Endothelial cell of umbilical vein (primary cell): ENCODE measurements at regions of chr2 and their contacts with region 1.

Region 1: DNA sequence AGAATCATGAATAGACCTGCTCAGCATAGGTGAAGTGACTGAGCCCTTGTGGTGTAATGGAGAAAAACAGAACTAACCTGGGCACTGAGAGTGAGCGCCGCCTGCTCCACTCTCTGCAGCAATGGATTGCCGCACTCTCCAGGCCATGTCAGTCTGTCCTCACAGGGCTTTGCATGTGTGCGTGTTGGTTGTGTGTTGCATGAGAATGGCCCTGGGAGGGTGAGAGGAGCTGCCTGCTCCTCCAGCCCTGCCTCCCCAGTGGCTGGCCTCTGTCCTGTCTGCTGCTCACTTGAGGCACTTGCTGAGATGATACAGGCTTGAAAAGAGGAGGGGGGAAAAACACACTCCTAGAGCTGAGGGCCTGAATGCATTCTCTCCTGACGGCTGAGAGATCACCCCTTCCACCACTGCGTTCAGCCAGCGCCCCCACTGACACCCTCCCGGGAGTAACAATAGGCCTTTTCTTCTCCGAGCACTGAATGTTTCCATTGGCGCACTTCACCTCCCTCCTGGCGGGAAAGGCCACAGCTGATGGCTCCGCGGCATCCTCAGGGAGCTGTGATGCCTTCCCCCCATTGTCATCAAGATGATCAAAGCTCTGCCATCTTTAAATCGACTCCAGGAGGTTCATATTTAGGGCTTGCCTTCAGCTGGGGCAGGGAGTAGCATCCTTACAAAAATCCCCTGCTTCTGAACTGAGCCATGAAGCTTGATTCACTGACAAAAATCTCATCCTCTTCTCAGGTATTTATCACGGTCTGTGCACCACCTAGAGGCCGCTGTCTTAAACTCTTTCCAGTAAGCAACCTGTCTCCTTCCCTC is 49.9 kb upstream of the DAPL1 start:
- DNase-seq: peak; percentile 80
- H3K4me3 ChIP-seq: no peak overlapping the region
- H3K27ac ChIP-seq: no peak overlapping the region
- H3K4me1 ChIP-seq: peaks cover 3% of the 10 kb centered on the region
- H3K27me3 ChIP-seq: peaks cover 23 to 28% of the 10 kb centered on the region in 2 experiments
- CTCF ChIP-seq: peak; percentile 46 to 53
- POLR2A ChIP-seq: no peak

Region 2: GRCh38 chr2:158024288-158024898 is 720.9 kb before region 1 on chr2:
- CTCF ChIA-PET with region 1: interaction called, 207 read pairs
- POLR2A ChIA-PET with region 1: no interaction called
- dilution Hi-C with region 1: no loop called
- intact Hi-C with region 1: loop called (anchors 2 kb)
- DNase-seq: peak; percentile 61
- H3K4me3 ChIP-seq: no peak overlapping the region
- H3K27ac ChIP-seq: no peak overlapping the region
- H3K4me1 ChIP-seq: no peaks in the 10 kb centered on the region
- H3K27me3 ChIP-seq: peaks cover 6 to 11% of the 10 kb centered on the region in 2 experiments
- CTCF ChIP-seq: peak; percentile 70 to 84
- POLR2A ChIP-seq: no peak

Region 3: DNA sequence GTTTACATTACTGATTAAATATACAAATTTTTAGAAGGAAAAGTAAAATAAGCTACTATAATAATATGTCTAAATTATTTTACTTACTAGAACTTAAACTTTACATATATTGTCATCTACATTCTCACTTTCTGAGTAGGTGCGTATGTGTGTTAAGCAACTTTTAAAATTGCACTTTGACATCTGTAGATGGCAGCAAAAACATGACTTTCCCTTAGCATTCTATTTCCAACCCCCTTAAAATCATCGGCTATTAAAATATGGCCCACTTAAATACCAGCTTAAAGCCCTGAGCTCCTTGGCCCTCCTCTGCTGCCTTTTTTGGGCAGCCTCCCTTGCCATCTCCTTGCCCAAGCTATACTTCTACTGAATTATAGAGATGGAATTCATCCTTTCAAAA is 565.6 kb before region 1 on chr2:
- CTCF ChIA-PET with region 1: interaction called, 101 read pairs
- POLR2A ChIA-PET with region 1: no interaction called
- dilution Hi-C with region 1: no loop called
- intact Hi-C with region 1: loop called (anchors 1 kb)
- DNase-seq: peak; percentile 48
- H3K4me3 ChIP-seq: no peak overlapping the region
- H3K27ac ChIP-seq: no peak overlapping the region
- H3K4me1 ChIP-seq: no peaks in the 10 kb centered on the region
- H3K27me3 ChIP-seq: peaks cover 14 to 22% of the 10 kb centered on the region in 2 experiments
- CTCF ChIP-seq: peak in 1 of 2 donors; percentile 27
- POLR2A ChIP-seq: no peak

Region 4: DNA sequence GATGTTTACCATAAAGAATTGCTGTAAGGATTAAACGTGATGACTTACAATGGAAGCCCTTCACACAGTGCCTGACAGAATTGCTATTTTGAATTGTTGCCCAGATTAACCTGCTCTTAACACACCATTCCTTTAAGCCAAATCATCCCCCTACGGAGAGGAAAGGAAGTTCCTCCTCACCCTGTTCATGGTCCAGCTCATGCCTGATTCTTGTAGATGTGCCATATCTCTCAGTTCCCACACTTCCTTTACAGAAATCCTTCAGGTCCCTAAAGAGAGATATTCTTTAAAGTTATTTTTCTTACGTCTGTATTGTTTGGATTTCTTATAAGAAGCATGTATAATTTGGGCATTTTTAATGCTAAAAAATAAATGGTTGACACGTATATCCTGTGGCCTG is 77.7 kb before region 1 on chr2:
- CTCF ChIA-PET with region 1: interaction called, 13 read pairs
- POLR2A ChIA-PET with region 1: interaction called, 3 read pairs
- dilution Hi-C with region 1: no loop called
- intact Hi-C with region 1: loop called (anchors 1 kb)
- DNase-seq: peak; percentile 97
- H3K4me3 ChIP-seq: peak overlapping the region in 1 of 3 experiments; percentile 30
- H3K27ac ChIP-seq: peak overlapping the region; percentile 82
- H3K4me1 ChIP-seq: peaks cover 34% of the 10 kb centered on the region
- H3K27me3 ChIP-seq: no peaks in the 10 kb centered on the region
- CTCF ChIP-seq: no peak
- POLR2A ChIP-seq: peak; percentile 61

Region 5: DNA sequence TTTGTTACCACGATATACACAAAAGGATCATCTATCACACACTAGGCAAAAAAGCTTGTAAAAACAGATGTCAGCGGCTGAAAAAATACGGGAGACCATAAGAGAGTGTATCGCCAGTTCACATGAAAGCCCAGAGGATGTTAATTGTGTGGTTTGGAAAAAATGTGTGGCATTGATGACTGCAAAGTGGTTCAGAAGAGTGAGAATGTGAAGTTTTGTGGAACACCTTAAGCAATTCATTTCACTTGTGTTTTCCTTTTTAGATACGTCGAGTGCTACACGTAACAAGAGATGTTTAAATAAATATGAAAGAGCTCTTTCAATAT is 11.9 kb before region 1 on chr2:
- CTCF ChIA-PET with region 1: interaction called, 21 read pairs
- POLR2A ChIA-PET with region 1: no interaction called
- dilution Hi-C with region 1: no loop called
- intact Hi-C with region 1: no loop called
- DNase-seq: no peak
- H3K4me3 ChIP-seq: no peak overlapping the region
- H3K27ac ChIP-seq: no peak overlapping the region
- H3K4me1 ChIP-seq: no peaks in the 10 kb centered on the region
- H3K27me3 ChIP-seq: peaks cover 0 to 14% of the 10 kb centered on the region in 2 experiments
- CTCF ChIP-seq: no peak
- POLR2A ChIP-seq: no peak